Naive thymus-derived CD8-positive, alpha-beta T cell (primary cell): ENCODE measurements at regions of chr16 and their contacts with region 1.

Region 1: DNA sequence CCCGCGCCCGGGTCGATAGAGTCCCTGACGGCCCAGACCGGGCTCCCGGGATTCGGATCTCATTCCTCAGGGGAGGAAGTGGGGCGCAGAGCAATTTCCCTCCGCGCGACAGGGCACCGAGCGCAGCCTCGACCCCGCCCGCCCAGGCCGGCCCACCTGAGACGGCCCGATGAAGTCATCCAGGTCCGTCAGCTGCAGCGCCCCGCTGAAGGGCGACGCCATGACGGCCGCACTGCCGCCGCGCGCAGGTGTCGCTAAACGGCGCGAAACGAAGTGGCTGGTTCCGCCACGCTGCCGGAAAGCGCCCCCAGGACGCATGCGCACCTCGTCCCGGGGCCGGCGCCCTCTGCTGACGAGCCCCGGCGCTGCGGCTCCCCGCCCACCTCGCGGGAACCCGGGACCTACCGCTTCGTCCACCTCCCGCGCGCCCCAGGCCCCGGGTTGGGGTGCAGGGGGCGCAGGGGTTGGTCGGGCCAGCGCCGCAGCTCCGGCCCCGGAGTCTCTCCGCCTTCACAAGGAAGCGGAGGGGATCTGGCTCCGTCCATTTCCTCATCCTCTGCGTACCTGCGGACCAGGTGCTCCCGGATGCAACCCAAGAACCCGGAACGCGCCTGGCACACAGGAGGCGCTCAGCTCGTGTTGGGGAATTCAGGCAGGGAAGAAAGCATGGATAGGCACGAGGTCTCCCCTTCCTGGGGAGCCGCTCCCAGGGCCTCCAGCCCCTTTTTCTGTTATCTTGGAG is at the start of gene CIAO3:
- DNase-seq: peak; percentile 84 to 99 (median 92)
- ATAC-seq: peak; percentile 92 to 96
- H3K4me3 Mint-ChIP-seq: peak within 1 kb of the TSS; percentile 73 to 85 (median 76)
- H3K27ac Mint-ChIP-seq: peak within 1 kb of the TSS in 7 of 10 donors; percentile 43 to 82 (median 60)
- H3K4me1 Mint-ChIP-seq: peaks cover 0 to 19% (median 8%) of the 10 kb centered on the region in 4 donors
- H3K27me3 Mint-ChIP-seq: no peaks in the 10 kb centered on the region
- polyA plus RNA-seq, gene CIAO3: 13.7 to 25.7 (median 16.9) TPM

Region 2: GRCh38 chr16:720990-721764 is 19.8 kb before region 1 on chr16 and contains the start of gene ANTKMT:
- POLR2A ChIA-PET with region 1: interaction called, 411 read pairs
- DNase-seq: peak; percentile 66 to 83 (median 78)
- ATAC-seq: peak; percentile 71
- H3K4me3 Mint-ChIP-seq: peak within 1 kb of the TSS; percentile 79 to 95 (median 87)
- H3K27ac Mint-ChIP-seq: peak within 1 kb of the TSS; percentile 69 to 96 (median 91)
- H3K4me1 Mint-ChIP-seq: peaks cover 25 to 51% (median 38%) of the 10 kb centered on the region in 4 donors
- H3K27me3 Mint-ChIP-seq: no peaks in the 10 kb centered on the region
- polyA plus RNA-seq, gene ANTKMT: 93.5 to 128 (median 113) TPM

Region 3: GRCh38 chr16:728131-728889 is 12.6 kb before region 1 on chr16:
- POLR2A ChIA-PET with region 1: interaction called, 411 read pairs
- DNase-seq: peak; percentile 48 to 73 (median 65)
- ATAC-seq: peak; percentile 59 to 75
- H3K4me3 Mint-ChIP-seq: peak overlapping the region in 9 of 10 donors; percentile 25 to 73 (median 50)
- H3K27ac Mint-ChIP-seq: no peak overlapping the region
- H3K4me1 Mint-ChIP-seq: peaks cover 5 to 11% (median 7%) of the 10 kb centered on the region in 4 donors
- H3K27me3 Mint-ChIP-seq: no peaks in the 10 kb centered on the region

Region 4: GRCh38 chr16:790086-790485 is 49.2 kb after region 1 on chr16:
- POLR2A ChIA-PET with region 1: no interaction called
- DNase-seq: no peak
- ATAC-seq: no peak
- H3K4me3 Mint-ChIP-seq: peak overlapping the region in 8 of 10 donors; percentile 39 to 82 (median 60)
- H3K27ac Mint-ChIP-seq: no peak overlapping the region
- H3K4me1 Mint-ChIP-seq: peaks cover 0 to 15% (median 6%) of the 10 kb centered on the region in 4 donors
- H3K27me3 Mint-ChIP-seq: no peaks in the 10 kb centered on the region